OCI-LY7 (cell line): ENCODE measurements at regions of chrX and their contacts with region 1.

Region 1: DNA sequence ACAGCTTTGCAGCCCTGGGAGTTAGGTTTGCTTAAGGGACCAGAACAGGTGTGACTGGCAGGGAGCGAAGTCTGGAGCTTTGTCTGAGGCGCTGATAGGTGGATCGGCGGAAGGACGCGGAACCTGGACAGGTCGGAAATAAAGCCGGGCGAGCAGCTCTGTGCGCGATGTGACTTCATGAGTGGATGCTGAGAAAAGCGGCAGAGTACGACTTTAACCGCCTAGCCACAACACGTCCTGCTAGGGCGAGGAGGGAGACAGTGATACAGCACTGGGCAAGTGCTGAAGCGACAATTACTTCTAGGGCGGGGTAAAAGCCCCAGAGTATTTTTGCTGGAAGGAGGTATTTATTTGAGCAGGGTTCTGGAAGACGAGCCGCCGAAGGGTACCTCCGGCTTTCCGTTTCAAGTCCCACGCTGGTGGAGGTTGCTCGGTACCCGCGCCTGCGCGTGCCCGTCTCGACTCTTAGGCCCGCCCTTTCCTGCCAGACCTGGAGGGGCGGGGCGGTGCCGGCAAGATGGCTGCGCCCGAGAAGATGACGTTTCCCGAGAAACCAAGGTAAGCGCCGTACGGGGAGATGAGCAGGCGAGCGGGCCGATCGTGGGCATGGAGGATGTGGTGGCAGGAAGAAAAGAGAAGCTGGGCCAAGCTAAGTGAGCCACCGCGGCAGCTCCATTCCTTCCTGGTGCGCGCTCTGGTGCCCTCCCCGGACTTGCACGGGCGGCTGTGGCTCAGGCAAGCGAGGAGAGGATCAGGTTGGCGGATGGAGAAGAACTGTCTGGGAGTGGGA is at the start of gene ZRSR2:
- DNase-seq: peak; percentile 86
- H3K4me3 ChIP-seq: peak within 1 kb of the TSS; percentile 89
- H3K27ac ChIP-seq: peak within 1 kb of the TSS; percentile 89
- H3K4me1 ChIP-seq: peaks cover 7% of the 10 kb centered on the region
- CTCF ChIP-seq: no peak
- total RNA-seq, gene ZRSR2: 6.2 and 6.5 TPM in 2 replicates

Region 2: GRCh38 chrX:14872851-14873675 is 917.1 kb before region 1 on chrX and contains the starts of genes FANCB and MOSPD2:
- CTCF ChIA-PET with region 1: no interaction called
- POLR2A ChIA-PET with region 1: no interaction called
- intact Hi-C with region 1: loop called (anchors 10 kb)
- DNase-seq: peak; percentile 92
- H3K4me3 ChIP-seq: peak within 1 kb of the TSS; percentile 88
- H3K27ac ChIP-seq: peak within 1 kb of the TSS; percentile 53
- H3K4me1 ChIP-seq: peaks cover 10% of the 10 kb centered on the region
- CTCF ChIP-seq: no peak
- total RNA-seq, gene FANCB: 15.2 TPM in 2 replicates
- total RNA-seq, gene MOSPD2: 8.0 and 8.8 TPM in 2 replicates

Region 3: GRCh38 chrX:15956676-15957075 is 166.5 kb after region 1 on chrX:
- CTCF ChIA-PET with region 1: no interaction called
- POLR2A ChIA-PET with region 1: no interaction called
- intact Hi-C with region 1: no loop called
- DNase-seq: no peak
- H3K4me3 ChIP-seq: no peak overlapping the region
- H3K27ac ChIP-seq: no peak overlapping the region
- H3K4me1 ChIP-seq: no peaks in the 10 kb centered on the region
- CTCF ChIP-seq: no peak